ENCODE measurements at regions of chr5 and their contacts with region 1.

Region 1: DNA sequence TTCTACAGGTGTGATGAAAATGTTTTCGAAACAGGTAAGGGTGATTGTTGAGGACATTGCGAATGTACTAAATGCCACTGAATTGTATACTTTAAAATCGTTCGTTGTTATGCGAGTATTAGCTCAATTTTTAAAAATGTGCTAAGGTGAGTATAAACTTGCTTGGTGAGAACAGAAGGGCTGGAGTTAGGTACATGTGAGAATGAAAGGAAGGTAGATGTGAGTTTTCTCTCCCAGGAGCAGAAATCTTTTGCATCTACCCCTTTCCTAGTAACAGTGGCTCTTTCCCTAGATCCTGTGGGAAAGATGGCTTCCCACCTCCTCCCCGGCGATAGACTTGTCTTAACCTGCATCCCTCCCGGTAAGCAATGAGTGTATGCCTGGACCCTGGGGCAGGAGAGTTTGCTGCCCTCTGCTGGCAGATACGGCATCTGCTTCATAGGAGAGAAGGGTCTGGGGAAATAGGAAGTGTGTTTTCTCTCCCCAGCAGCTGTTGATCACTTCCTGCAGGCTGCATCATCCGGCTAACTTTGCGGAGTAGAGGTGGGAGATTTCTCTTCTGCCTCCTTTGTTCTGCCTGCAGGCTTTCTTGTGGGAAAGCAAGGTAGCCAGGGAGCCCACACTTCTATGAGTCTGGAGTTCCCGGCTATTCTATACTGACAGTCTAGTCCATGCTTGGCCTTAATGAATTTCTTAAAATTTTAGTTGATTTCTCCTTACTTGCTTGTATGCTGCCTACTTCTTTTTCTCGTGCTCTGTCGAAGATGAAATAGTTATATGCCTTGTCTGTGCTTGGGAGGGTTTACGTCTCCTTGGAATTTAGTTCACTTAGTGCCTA is 373.3 kb upstream of the SEMA6A start:
- DNase-seq: peak; percentile 1 to 57 (median 30)
- ATAC-seq: peak; percentile 63
- H3K4me3 ChIP-seq: no peak overlapping the region
- H3K4me3 Mint-ChIP-seq: no peak overlapping the region
- H3K27ac ChIP-seq: no peak overlapping the region
- H3K27ac Mint-ChIP-seq: no peak overlapping the region
- H3K4me1 ChIP-seq: peaks cover 4% of the 10 kb centered on the region
- H3K4me1 Mint-ChIP-seq: no peaks in the 10 kb centered on the region
- H3K27me3 ChIP-seq: no peaks in the 10 kb centered on the region
- H3K27me3 Mint-ChIP-seq: no peaks in the 10 kb centered on the region
- CTCF ChIP-seq: peak; percentile 24

Region 2: DNA sequence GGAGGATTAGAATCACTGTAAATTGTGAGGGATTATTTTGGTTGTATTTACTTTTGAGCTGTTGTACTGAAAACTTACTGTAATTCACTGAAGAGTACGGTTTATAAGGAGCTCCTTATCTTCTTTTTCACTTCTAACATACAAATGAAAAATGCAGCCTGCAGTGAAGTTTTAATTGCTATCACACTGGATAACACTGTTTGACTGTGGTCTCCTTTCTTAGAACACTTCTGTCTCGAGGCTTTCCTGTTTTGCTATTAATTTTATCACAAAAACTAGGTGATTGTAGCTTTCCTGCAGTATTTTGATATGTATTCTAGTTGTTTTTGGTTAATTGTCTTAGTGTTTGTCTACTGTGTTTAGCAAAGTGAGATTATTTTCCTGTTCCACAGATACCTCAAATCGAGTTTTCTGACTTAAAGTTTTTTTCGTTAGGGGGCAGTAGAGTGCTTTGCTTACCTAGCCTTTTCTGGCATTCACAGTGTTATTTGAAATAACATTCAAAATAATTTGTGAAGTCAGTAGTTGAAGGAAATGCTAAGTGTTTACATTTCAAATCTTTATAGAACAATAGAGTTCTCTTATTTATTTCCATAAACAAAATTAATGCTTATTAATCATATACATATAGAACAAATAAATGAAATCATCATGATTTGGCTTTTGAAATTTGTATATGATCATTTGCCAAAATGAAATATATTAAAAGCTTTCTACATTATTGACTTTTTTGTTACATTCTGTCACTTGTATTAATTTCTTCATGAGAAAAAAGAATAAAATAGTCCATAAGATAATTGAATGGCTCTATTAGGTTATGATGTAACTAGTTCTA is 810.1 kb before region 1 on chr5:
- CTCF ChIA-PET with region 1: interaction called, 4 read pairs
- POLR2A ChIA-PET with region 1: no interaction called
- intact Hi-C with region 1: loop called in 1 of 2 experiments (anchors 5 kb)
- DNase-seq: peak in 3 of 14 experiments; percentile 62 to 64 (median 62)
- ATAC-seq: peak; percentile 43
- H3K4me3 ChIP-seq: no peak overlapping the region
- H3K4me3 Mint-ChIP-seq: no peak overlapping the region
- H3K27ac ChIP-seq: no peak overlapping the region
- H3K27ac Mint-ChIP-seq: peak overlapping the region; percentile 81
- H3K4me1 ChIP-seq: peaks cover 4% of the 10 kb centered on the region
- H3K4me1 Mint-ChIP-seq: peaks cover 50% of the 10 kb centered on the region
- H3K27me3 ChIP-seq: no peaks in the 10 kb centered on the region
- H3K27me3 Mint-ChIP-seq: no peaks in the 10 kb centered on the region
- CTCF ChIP-seq: peak; percentile 92

Region 3: DNA sequence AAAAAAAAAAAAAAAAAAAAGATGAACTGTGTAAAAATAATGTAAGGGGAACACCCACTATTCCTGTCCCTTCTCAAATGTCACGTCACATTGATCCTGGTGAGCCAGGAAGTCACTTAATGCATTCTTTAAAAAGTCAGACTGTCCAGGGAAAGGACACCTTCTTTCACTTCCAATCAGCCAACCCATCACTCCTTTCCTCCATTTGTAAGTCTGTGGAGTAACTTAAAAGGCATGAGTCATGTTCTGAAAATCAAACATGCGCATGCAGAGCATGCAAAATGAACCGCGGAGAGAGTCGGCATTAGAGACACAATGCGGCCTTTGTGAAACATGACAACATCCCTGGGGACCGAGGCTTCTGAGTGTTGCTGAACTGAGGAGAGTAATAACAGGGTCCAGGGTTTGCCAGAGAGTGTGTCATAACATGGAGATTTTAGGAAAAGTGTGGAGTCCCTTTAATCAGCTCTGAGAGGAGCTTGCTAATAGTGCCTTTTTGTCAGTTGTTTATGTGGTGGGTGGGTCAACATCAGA is 295.6 kb before region 1 on chr5:
- CTCF ChIA-PET with region 1: no interaction called
- POLR2A ChIA-PET with region 1: no interaction called
- intact Hi-C with region 1: no loop called
- DNase-seq: no peak
- ATAC-seq: no peak
- H3K4me3 ChIP-seq: no peak overlapping the region
- H3K4me3 Mint-ChIP-seq: no peak overlapping the region
- H3K27ac ChIP-seq: no peak overlapping the region
- H3K27ac Mint-ChIP-seq: no peak overlapping the region
- H3K4me1 ChIP-seq: no peaks in the 10 kb centered on the region
- H3K4me1 Mint-ChIP-seq: no peaks in the 10 kb centered on the region
- H3K27me3 ChIP-seq: no peaks in the 10 kb centered on the region
- H3K27me3 Mint-ChIP-seq: peaks cover 10% of the 10 kb centered on the region
- CTCF ChIP-seq: no peak

Region 4: GRCh38 chr5:116788851-116789403 is 159.0 kb before region 1 on chr5:
- CTCF ChIA-PET with region 1: no interaction called
- POLR2A ChIA-PET with region 1: no interaction called
- intact Hi-C with region 1: no loop called
- DNase-seq: no peak
- ATAC-seq: no peak
- H3K4me3 ChIP-seq: no peak overlapping the region
- H3K4me3 Mint-ChIP-seq: no peak overlapping the region
- H3K27ac ChIP-seq: no peak overlapping the region
- H3K27ac Mint-ChIP-seq: no peak overlapping the region
- H3K4me1 ChIP-seq: no peaks in the 10 kb centered on the region
- H3K4me1 Mint-ChIP-seq: no peaks in the 10 kb centered on the region
- H3K27me3 ChIP-seq: no peaks in the 10 kb centered on the region
- H3K27me3 Mint-ChIP-seq: no peaks in the 10 kb centered on the region
- CTCF ChIP-seq: no peak

Region 5: DNA sequence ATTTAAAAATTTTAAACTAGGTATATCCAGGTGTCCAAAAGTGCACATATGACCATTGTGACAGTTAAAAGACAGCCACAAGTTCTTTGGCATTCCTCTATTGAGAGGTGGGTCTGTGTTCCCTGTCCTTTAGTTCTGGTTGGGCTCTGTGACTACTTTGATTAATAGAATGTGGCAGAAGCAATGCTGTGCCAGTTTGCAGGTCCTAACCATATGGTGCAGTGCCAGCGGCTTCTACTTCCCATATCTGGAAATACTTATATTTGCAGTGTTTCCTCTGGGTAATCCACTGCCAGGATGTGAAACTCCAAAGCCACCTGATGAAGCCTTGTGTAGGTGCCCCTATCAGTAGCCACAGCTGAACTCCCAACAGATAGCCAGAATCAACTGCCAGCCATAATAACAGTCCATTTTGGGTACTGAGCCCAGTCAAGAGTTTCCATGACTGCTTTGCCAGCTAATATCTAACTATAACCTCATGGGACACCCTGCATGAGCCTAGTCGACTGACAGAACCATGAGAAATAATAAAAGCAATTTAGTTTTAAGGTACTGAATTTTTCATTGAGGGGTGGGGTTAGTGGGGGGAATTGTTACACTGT is 12.2 kb before region 1 on chr5:
- CTCF ChIA-PET with region 1: no interaction called
- POLR2A ChIA-PET with region 1: no interaction called
- intact Hi-C with region 1: no loop called
- DNase-seq: no peak
- ATAC-seq: no peak
- H3K4me3 ChIP-seq: no peak overlapping the region
- H3K4me3 Mint-ChIP-seq: no peak overlapping the region
- H3K27ac ChIP-seq: no peak overlapping the region
- H3K27ac Mint-ChIP-seq: no peak overlapping the region
- H3K4me1 ChIP-seq: no peaks in the 10 kb centered on the region
- H3K4me1 Mint-ChIP-seq: no peaks in the 10 kb centered on the region
- H3K27me3 ChIP-seq: no peaks in the 10 kb centered on the region
- H3K27me3 Mint-ChIP-seq: no peaks in the 10 kb centered on the region
- CTCF ChIP-seq: no peak

Region 6: GRCh38 chr5:117812861-117813260 is 865.0 kb after region 1 on chr5:
- CTCF ChIA-PET with region 1: no interaction called
- POLR2A ChIA-PET with region 1: no interaction called
- intact Hi-C with region 1: no loop called
- DNase-seq: no peak
- ATAC-seq: no peak
- H3K4me3 ChIP-seq: no peak overlapping the region
- H3K4me3 Mint-ChIP-seq: no peak overlapping the region
- H3K27ac ChIP-seq: no peak overlapping the region
- H3K27ac Mint-ChIP-seq: no peak overlapping the region
- H3K4me1 ChIP-seq: no peaks in the 10 kb centered on the region
- H3K4me1 Mint-ChIP-seq: no peaks in the 10 kb centered on the region
- H3K27me3 ChIP-seq: no peaks in the 10 kb centered on the region
- H3K27me3 Mint-ChIP-seq: no peaks in the 10 kb centered on the region
- CTCF ChIP-seq: no peak